Keratinocyte (primary cell): ENCODE measurements at regions of chr22 and their contacts with region 1.

Region 1: GRCh38 chr22:22767876-22768602 is 119.6 kb upstream of the IGLL5 start:
- DNase-seq: no peak
- H3K4me3 ChIP-seq: no peak overlapping the region
- H3K27ac ChIP-seq: no peak overlapping the region
- H3K4me1 ChIP-seq: no peaks in the 10 kb centered on the region
- H3K27me3 ChIP-seq: no peaks in the 10 kb centered on the region
- CTCF ChIP-seq: peak in 1 of 3 experiments; percentile 11

Region 2: GRCh38 chr22:22709719-22710445 is 58.2 kb before region 1 on chr22:
- dilution Hi-C with region 1: loop called (anchors 5 kb)
- DNase-seq: no peak
- H3K4me3 ChIP-seq: no peak overlapping the region
- H3K27ac ChIP-seq: no peak overlapping the region
- H3K4me1 ChIP-seq: no peaks in the 10 kb centered on the region
- H3K27me3 ChIP-seq: no peaks in the 10 kb centered on the region
- CTCF ChIP-seq: peak in 2 of 3 experiments; percentile 11 to 49

Region 3: DNA sequence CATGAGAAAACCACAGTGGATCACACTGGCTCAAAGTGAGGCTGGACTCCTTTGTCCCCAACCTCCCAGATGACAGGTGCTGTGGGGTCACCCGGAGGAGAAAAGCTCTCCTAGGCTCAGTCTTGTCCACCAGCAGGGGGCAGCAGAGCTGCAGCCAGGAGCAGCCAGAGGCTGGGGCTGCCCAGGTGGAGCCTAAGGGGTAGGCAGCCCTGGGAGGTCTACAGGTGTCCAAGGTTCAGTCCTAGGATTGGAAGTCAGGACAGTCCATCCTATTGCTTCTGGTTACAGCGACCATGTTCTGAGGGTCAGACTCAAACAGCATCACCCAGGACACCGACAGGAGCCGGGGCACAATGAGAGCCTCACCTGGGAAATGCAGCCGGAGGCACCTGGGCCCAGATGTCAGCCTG is 42.0 kb after region 1 on chr22:
- dilution Hi-C with region 1: no loop called
- DNase-seq: no peak
- H3K4me3 ChIP-seq: no peak overlapping the region
- H3K27ac ChIP-seq: no peak overlapping the region
- H3K4me1 ChIP-seq: no peaks in the 10 kb centered on the region
- H3K27me3 ChIP-seq: peaks cover 4% of the 10 kb centered on the region
- CTCF ChIP-seq: peak; percentile 58 to 96 (median 62)